Activated CD8-positive, alpha-beta T cell treated with anti-CD3 and anti-CD28 coated beads for 36 hours (primary cell): ENCODE measurements at regions of chr22 and their contacts with region 1.

Region 1: GRCh38 chr22:19178656-19179496 is at the start of gene SLC25A1:
- DNase-seq: peak; percentile 88
- ATAC-seq: peak; percentile 85
- H3K4me3 Mint-ChIP-seq: peak within 1 kb of the TSS; percentile 75
- H3K27ac Mint-ChIP-seq: peak within 1 kb of the TSS; percentile 53
- H3K4me1 Mint-ChIP-seq: peaks cover 32% of the 10 kb centered on the region
- H3K27me3 Mint-ChIP-seq: no peaks in the 10 kb centered on the region
- CTCF ChIP-seq: no peak
- total RNA-seq, gene SLC25A1: 56.4 to 57.6 TPM

Region 2: GRCh38 chr22:19143967-19144400 is 34.9 kb before region 1 on chr22:
- CTCF ChIA-PET with region 1: interaction called, 11 read pairs
- POLR2A ChIA-PET with region 1: interaction called, 5 read pairs
- intact Hi-C with region 1: no loop called
- DNase-seq: peak; percentile 72
- ATAC-seq: peak; percentile 45
- H3K4me3 Mint-ChIP-seq: peak overlapping the region; percentile 92
- H3K27ac Mint-ChIP-seq: peak overlapping the region; percentile 97
- H3K4me1 Mint-ChIP-seq: peaks cover 17% of the 10 kb centered on the region
- H3K27me3 Mint-ChIP-seq: peaks cover 2% of the 10 kb centered on the region
- CTCF ChIP-seq: no peak

Region 3: DNA sequence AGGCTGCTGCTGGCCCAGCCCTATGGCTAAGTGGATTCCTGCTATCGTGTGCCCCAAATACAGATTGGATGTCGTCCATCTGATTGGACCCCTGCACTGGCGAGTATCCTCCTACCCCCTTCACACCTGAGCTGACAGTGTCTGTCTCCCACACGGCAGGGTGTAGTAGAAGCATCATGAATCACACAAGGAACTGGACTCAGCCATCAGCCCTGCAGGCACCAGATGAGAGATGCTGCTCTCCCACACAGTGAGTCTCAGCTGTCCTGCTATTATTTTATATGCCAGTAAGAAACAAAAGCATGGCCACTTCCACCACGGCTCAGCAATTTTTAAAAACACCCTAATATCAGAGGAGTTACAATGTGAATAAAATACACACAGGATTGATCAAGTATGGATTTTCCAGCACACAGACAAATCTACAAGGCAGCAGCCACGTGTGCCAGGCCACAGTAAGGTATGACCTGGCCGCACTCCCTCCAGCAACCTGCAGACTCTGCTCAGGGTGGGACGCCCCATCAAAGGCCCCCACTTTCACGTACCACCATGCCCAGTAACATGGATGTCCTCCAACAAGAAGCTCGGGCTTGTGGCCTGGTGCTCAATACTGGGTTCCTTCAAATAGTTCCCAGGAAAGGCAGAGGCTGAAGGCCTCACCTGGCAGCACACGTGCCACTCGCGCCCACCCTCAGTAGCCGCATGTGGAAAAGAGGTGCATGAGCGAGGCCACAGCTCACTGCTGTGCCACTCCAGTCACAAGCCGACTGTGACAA is 16.1 kb after region 1 on chr22:
- CTCF ChIA-PET with region 1: interaction called, 10 read pairs
- POLR2A ChIA-PET with region 1: no interaction called
- intact Hi-C with region 1: no loop called
- DNase-seq: no peak
- ATAC-seq: no peak
- H3K4me3 Mint-ChIP-seq: no peak overlapping the region
- H3K27ac Mint-ChIP-seq: no peak overlapping the region
- H3K4me1 Mint-ChIP-seq: peaks cover 10% of the 10 kb centered on the region
- H3K27me3 Mint-ChIP-seq: no peaks in the 10 kb centered on the region
- CTCF ChIP-seq: no peak

Region 4: DNA sequence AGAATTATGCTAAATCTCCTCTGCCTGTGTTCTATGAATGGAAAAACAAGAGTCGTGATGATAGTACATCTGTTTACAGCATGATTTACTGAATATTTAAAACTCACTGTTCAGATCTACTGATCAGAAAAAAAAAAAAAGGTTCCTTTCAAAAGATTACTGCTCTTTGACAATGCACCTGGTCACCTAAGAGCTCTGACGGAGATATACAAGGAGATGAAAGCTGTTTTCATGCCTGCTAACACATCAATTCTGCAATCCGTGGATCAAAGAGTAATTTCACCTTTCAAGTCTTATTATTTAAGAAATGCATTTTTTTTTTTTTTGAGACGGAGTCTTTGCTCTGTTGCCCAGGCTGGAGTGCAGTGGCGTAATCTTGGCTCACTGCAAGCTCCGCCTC is 81.9 kb after region 1 on chr22:
- CTCF ChIA-PET with region 1: no interaction called
- POLR2A ChIA-PET with region 1: no interaction called
- intact Hi-C with region 1: no loop called
- DNase-seq: no peak
- ATAC-seq: no peak
- H3K4me3 Mint-ChIP-seq: no peak overlapping the region
- H3K27ac Mint-ChIP-seq: no peak overlapping the region
- H3K4me1 Mint-ChIP-seq: peaks cover 12% of the 10 kb centered on the region
- H3K27me3 Mint-ChIP-seq: peaks cover 2% of the 10 kb centered on the region
- CTCF ChIP-seq: no peak

Region 5: GRCh38 chr22:19622061-19622441 is 443.2 kb after region 1 on chr22:
- CTCF ChIA-PET with region 1: no interaction called
- POLR2A ChIA-PET with region 1: no interaction called
- intact Hi-C with region 1: no loop called
- DNase-seq: no peak
- ATAC-seq: no peak
- H3K4me3 Mint-ChIP-seq: no peak overlapping the region
- H3K27ac Mint-ChIP-seq: no peak overlapping the region
- H3K4me1 Mint-ChIP-seq: peaks cover 12% of the 10 kb centered on the region
- H3K27me3 Mint-ChIP-seq: no peaks in the 10 kb centered on the region
- CTCF ChIP-seq: no peak